ENCODE measurements at regions of chr2 and their contacts with region 1.

Region 1: DNA sequence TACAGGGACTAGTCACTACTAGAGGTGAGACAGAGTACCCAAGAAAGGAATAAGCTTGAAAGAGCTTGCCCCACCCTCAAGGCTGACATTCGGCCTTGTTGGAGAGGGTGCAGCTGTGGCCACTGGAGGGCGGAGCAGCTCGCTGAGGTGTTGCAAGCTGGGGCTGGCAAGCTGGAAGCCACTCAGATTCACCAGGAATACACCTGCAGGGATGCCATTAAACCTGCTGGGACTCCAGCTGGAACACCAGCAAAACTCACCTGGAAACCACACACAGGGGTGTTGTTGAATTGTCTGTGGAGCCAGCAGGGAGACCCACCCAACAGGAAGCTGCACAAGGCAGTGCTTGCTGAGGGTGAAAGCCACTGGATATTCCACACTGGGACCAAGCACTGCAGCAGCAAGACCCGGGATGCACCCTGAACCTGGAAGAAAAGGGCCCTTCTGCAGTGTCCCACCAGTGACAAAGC is 26.1 kb downstream of the KCTD18 start:
- DNase-seq: peak; percentile 57 to 79
- H3K4me3 ChIP-seq: no peak overlapping the region
- H3K27ac ChIP-seq: no peak overlapping the region
- H3K4me1 ChIP-seq: peaks cover 0 to 6% (median 2%) of the 10 kb centered on the region in 4 experiments; a peak in 3 of 7 replicates
- H3K27me3 ChIP-seq: no peaks in the 10 kb centered on the region
- CTCF ChIP-seq: peak; percentile 89 to 96 (median 90)
- EP300 ChIP-seq: no peak
- POLR2A ChIP-seq: no peak
- RAD21 ChIP-seq: peak; percentile 76 to 83

Region 2: DNA sequence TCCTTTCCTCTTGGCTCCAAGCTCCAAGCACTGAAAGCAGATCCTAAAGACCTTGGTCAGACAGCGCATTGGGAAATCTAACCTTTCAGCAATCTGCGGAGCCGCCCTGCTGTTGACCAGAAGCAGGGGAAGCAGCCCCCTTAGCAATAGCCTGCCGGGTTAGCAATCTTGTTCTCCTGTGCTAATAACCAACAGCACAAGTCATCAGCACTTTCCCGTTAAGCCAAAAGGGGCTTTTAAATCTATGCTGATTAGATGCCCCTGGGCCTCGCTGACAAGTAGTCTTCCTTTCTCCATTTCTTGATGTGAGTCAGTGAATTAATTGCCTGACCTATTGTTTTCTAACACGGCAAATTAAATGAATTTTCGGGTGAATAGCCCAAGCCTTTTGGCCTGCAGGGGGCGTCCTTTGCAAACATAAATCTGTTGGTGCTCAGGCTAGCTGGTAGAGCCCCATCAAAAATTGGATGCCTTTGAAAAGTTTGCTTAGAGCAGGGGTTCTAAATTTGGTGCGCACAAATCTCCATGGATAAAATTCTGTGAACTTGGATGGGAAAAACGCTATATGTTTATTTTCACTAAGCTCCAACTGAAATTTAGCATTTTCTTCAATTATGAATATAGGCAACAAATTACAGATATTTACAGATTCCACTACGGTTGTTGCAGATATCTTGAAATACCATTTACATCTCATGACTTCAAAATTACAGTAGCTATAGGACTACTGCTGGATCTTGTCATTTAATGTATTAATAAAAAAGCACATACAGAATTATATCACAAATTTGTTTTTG is 503.7 kb before region 1 on chr2:
- CTCF ChIA-PET with region 1: interaction called, 46 read pairs
- POLR2A ChIA-PET with region 1: interaction called, 4 read pairs
- DNase-seq: peak; percentile 63 to 96
- H3K4me3 ChIP-seq: peak overlapping the region in 3 of 4 experiments; percentile 16 to 44 (median 37); a peak in 4 of 8 replicates
- H3K27ac ChIP-seq: no peak overlapping the region
- H3K4me1 ChIP-seq: peaks cover 6 to 17% (median 11%) of the 10 kb centered on the region in 4 experiments; a peak in 6 of 7 replicates
- H3K27me3 ChIP-seq: no peaks in the 10 kb centered on the region
- CTCF ChIP-seq: peak; percentile 29 to 81 (median 75)
- EP300 ChIP-seq: no peak
- POLR2A ChIP-seq: no peak
- RAD21 ChIP-seq: peak; percentile 91 to 93

Region 3: GRCh38 chr2:200054681-200055468 is 428.9 kb before region 1 on chr2:
- CTCF ChIA-PET with region 1: interaction called, 15 read pairs
- POLR2A ChIA-PET with region 1: no interaction called
- DNase-seq: peak; percentile 59 to 83
- H3K4me3 ChIP-seq: no peak overlapping the region
- H3K27ac ChIP-seq: no peak overlapping the region
- H3K4me1 ChIP-seq: peaks cover 0 to 8% (median 0%) of the 10 kb centered on the region in 4 experiments; a peak in 1 of 7 replicates
- H3K27me3 ChIP-seq: no peaks in the 10 kb centered on the region; a peak in 1 of 7 replicates
- CTCF ChIP-seq: peak; percentile 70 to 81 (median 75)
- EP300 ChIP-seq: no peak
- POLR2A ChIP-seq: no peak
- RAD21 ChIP-seq: peak; percentile 92 to 93

Region 4: DNA sequence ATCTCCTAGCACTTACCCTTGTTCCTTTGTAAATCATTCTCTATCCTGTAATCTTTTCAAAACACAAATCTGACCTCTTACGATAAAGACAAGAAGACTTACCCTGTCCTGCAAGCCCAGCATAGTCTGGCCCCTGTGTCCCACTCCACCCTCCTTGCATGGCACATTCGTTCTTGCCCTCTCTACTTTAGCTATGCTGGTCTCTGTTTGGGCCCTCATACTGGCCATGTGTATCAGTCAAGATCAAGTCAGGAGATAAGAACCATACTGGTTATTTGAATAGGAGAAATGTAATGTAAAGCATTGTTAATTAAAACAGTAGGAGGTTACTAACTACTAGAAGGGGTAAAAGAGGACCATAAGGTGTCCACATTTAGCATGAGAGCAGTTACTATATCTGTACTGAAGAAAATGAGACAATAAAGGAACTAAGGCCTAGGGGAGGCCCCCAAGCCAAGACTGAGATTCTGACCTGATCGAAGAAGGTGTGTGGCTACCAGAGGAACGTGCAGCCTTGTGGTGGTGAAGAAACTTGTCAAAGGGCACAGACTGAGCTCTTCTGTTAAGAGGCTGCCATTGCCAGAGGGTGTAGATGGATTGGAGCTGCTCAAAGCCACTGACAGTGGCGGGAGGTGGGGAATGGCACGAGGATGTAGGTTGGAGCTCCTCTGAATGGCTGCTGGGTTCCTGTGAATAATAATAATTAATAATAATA is 54.7 kb before region 1 on chr2:
- CTCF ChIA-PET with region 1: no interaction called
- POLR2A ChIA-PET with region 1: no interaction called
- DNase-seq: no peak
- H3K4me3 ChIP-seq: no peak overlapping the region
- H3K27ac ChIP-seq: no peak overlapping the region
- H3K4me1 ChIP-seq: peaks cover 0 to 6% (median 1%) of the 10 kb centered on the region in 4 experiments; a peak in 2 of 7 replicates
- H3K27me3 ChIP-seq: no peaks in the 10 kb centered on the region
- CTCF ChIP-seq: no peak
- EP300 ChIP-seq: no peak
- POLR2A ChIP-seq: 0 out of 3 replicates have a peak, but pooled peaks of 1 of the 2 experiments have one; percentile 51
- RAD21 ChIP-seq: no peak

Region 5: DNA sequence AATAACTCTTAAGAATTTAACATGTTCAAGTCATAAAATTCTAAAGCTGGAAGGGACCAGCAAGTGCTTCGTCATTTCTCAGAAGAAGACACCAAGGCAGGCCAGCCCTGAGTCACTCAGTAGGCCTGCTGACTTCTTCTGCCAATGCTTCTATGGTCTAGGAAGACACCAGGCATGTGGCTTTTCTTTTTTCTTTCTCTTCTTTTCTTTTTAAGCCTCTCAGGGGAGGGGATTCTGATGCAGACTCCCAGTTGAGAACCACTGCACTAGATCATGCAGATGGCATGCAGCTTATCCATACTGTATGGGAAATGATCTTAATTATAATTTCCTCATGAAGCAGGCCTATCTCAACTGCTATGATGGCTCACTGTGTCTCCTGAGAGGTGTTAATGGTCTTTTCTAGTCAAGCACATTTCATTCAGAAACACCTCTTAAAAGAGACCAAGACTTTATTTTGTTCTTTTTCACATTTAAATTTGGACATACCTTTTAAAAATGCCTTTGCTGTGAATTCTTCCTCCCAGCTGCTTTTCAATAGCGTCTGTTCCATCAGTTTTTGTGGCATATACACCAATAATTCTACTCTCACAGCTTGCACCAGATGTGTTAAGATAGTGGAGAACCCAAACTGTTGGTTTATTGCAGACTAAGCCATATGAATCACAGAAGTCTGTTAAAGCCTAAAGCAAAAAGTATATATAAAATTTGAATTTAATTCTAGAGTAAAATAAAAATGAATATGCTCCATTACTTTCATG is 14.8 kb after region 1 on chr2:
- CTCF ChIA-PET with region 1: interaction called, 36 read pairs
- POLR2A ChIA-PET with region 1: interaction called, 3 read pairs
- DNase-seq: no peak
- H3K4me3 ChIP-seq: no peak overlapping the region
- H3K27ac ChIP-seq: no peak overlapping the region
- H3K4me1 ChIP-seq: no peaks in the 10 kb centered on the region; a peak in 1 of 7 replicates
- H3K27me3 ChIP-seq: no peaks in the 10 kb centered on the region
- CTCF ChIP-seq: no peak
- EP300 ChIP-seq: no peak
- POLR2A ChIP-seq: no peak
- RAD21 ChIP-seq: no peak

Region 6: GRCh38 chr2:200525882-200526651 is 42.3 kb after region 1 on chr2 and contains the start of gene SGO2:
- CTCF ChIA-PET with region 1: interaction called, 10 read pairs
- POLR2A ChIA-PET with region 1: no interaction called
- DNase-seq: peak; percentile 77 to 89
- H3K4me3 ChIP-seq: peak within 1 kb of the TSS; percentile 68 to 82 (median 80)
- H3K27ac ChIP-seq: no peak within 1 kb of the TSS
- H3K4me1 ChIP-seq: peaks cover 0 to 3% (median 1%) of the 10 kb centered on the region in 4 experiments; a peak in 5 of 7 replicates
- H3K27me3 ChIP-seq: peaks cover 0 to 5% (median 1%) of the 10 kb centered on the region in 4 experiments; a peak in 3 of 7 replicates
- CTCF ChIP-seq: peak in 2 of 3 experiments; percentile 9 to 21; a peak in 2 of 4 replicates
- EP300 ChIP-seq: no peak
- POLR2A ChIP-seq: no peak
- RAD21 ChIP-seq: peak in 1 of 2 experiments; percentile 13; a peak in 1 of 4 replicates
- total RNA-seq, gene SGO2: 29.0 and 33.2 TPM in 2 replicates